AG04449 (cell line): ENCODE measurements at regions of chr15 and their contacts with region 1.

Region 1: GRCh38 chr15:64809649-64810496 is 15.6 kb downstream of the PIF1 start:
- DNase-seq: no peak
- H3K4me3 ChIP-seq: no peak overlapping the region
- CTCF ChIP-seq: peak; percentile 95

Region 2: DNA sequence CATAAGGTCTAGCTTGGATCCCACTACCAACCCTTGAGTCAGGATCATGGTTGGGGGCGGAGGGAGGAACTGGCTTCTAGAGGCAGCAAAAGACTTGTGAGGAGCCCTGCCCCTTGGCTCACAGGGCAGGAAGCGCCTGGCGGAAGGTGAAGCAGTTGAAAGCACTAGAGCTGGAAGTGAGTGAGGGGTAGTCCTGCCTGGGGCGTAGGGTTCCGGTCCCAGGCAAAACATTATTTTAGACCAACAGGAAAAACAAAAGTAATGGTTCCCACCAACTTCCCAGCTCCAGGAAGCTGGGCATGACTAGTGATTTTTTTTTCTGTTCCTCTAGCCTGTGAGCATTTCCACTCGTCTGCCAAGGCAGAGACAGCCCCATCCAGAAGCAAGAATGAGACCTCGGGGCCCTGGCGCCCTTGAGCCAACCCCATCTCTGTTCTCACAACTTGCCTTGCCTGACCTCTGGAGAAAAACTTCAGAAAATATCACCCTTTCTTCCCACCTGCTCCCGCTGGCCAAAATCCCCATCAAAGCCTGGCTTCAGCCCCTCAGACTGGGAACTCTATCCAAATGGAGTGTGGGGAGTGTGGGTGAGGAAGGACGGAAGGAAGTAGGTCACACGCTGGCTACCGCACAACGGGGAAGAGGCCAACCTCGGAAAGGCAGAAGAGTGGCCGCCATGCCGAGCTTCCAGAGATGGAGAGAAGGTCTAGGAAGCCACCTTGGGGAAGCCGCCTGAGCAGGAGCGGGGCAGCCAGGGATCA is 92.0 kb before region 1 on chr15:
- CTCF ChIA-PET with region 1: interaction called, 15 read pairs
- POLR2A ChIA-PET with region 1: no interaction called
- DNase-seq: no peak
- H3K4me3 ChIP-seq: no peak overlapping the region
- CTCF ChIP-seq: no peak

Region 3: DNA sequence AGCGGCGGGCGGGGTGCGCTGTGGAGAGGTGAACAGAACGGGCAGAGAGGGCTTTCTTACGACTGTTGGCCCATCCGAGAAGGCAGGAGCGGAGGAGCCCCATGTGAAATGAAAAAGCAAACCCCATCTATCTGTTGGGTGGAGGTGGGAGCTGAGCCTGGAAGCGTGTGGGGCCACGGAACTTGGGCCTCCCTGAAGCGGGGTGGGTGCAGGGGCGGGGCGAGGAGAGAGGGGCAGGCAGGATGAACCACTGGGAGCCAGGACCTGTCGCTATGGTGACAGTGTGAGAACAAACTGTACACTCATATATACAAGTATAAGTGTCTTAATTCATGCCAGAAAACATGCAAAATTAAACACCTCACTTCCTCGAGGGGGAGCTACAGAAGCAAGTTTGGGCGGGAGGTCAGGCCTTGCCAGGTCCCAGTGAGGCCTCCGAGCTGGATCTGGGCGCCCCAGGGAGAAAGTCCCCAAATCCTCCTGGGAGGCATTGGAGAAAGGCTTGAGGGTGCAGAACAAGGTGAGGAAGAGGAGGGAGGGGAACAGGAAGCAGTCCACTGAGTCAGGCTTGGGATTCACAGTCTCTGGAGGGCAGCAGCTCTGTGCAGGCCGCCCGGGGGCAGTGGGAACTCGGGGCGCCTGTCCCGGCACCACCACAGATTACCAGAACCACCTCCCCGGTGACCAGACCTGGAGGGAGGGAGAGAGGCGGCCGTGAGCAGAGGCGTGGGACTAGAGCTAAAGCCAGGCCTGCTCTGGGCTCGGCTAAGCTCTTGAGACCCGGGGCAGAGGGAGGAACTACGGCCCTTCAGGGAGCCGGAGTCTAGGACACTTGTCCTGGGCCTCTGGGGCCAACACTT is 69.3 kb before region 1 on chr15:
- CTCF ChIA-PET with region 1: interaction called, 14 read pairs
- POLR2A ChIA-PET with region 1: no interaction called
- DNase-seq: peak; percentile 5
- H3K4me3 ChIP-seq: no peak overlapping the region
- CTCF ChIP-seq: peak; percentile 11

Region 4: DNA sequence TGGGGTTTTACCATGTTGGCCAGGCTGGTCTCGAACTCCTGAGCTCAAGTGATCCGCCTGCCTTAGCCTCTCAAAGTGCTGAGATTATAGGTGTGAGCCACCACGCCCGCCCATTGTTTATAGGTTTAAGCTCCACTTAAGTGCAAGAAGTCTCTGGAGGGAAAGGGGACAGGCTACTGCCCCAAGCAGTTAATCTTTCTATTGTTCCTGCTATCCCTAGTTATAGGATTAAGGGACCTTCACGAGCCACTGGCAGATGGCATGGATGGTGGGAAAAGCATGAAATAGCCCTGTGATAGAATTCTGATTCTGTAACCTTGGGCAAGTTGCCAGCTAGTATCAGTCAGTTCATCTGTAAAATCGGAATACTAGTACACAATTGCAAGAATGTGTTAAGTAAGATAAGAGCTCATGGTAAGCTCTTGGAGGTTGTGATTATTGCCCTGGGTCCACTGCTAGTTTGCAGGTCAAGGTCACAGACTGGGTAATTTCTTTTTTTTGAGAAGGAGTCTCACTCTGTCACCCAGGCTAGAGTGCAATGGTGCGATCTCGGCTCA is 29.2 kb before region 1 on chr15:
- CTCF ChIA-PET with region 1: interaction called, 12 read pairs
- POLR2A ChIA-PET with region 1: no interaction called
- DNase-seq: no peak
- H3K4me3 ChIP-seq: no peak overlapping the region
- CTCF ChIP-seq: no peak

Region 5: GRCh38 chr15:64791401-64791800 is 18.5 kb before region 1 on chr15:
- CTCF ChIA-PET with region 1: interaction called, 31 read pairs
- POLR2A ChIA-PET with region 1: no interaction called
- DNase-seq: no peak
- H3K4me3 ChIP-seq: no peak overlapping the region
- CTCF ChIP-seq: no peak

Region 6: DNA sequence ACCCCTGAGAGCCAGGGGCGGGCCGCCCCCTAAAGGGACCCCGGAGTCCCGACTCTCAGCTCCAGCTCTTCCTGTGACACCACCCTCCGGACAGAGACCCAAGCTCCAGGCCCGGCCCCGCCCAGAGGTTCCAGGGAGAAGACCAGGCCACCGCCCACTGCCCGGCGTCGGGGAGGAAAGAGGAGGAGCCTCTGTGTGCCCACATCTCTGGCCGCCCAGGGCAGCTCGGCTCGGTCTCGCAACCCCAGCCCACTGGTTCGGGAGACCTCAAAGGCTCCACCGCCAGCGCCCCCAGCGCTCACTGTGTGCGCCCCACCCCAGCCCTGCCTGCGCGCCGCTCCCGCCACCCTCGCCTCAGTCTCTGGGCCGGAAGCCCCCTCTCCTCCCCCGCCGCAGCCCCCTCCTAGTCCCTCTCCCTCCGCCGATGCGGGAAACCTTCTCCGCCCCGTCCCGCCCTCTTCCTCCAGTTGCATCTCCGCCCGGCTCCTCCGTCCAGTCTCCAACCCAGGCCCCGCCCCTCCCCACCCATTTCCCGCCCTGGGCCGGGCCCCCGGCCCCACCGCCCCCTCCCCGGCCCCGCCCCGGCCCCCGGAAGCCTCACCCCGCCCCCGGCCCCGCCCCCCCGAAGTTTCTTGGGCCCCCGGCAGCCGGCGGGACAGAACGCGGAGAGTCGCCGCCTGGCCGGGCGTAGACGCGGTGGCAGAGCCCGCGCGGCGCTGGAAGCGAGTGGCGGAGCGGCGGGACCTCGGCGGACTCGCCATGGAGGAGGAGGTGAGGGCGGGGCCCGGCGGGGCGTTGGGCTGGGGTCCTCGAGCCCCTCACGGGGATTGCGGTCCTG is 31.6 kb after region 1 on chr15 and contains the start of gene PLEKHO2:
- CTCF ChIA-PET with region 1: interaction called, 11 read pairs
- POLR2A ChIA-PET with region 1: no interaction called
- DNase-seq: no peak
- H3K4me3 ChIP-seq: peak within 1 kb of the TSS; percentile 93
- CTCF ChIP-seq: peak; percentile 37

Region 7: DNA sequence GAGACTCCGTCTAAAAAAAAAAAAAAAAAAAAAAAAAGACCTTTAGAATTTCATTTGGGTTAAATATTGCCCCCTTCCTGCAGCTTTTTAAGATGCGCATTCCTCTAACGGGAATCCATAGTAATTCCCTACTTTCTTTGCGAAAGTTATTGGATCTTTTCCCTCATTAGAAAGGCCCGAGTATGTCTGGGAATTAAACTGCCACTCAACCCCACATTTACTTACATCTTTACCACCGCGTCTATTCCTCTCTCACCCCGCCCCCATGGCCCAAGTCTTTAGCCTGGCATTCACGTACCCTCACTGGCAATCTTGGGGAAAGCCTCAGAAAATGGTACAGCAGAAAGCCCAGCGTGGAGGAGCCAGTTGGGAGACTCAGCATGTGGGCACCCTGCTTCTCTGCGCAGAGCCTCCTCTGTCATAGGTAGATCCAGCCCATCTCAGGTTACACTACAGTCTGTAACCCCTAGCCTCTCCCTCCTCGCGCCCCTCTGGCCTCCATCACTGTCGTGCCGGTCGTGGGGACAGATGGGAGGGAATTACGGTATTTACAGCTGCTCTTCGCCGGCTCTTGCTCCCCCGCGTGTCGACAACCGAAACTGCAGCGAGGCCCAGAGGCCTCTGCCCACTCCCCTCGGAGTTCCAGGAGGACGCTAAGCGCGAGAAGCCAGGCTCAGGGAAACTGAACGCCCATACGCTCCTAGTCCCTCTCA is 95.4 kb after region 1 on chr15:
- CTCF ChIA-PET with region 1: interaction called, 33 read pairs
- POLR2A ChIA-PET with region 1: no interaction called
- DNase-seq: no peak
- H3K4me3 ChIP-seq: peak overlapping the region; percentile 43
- CTCF ChIP-seq: peak; percentile 90

Region 8: GRCh38 chr15:64975390-64975789 is 165.5 kb after region 1 on chr15:
- CTCF ChIA-PET with region 1: no interaction called
- POLR2A ChIA-PET with region 1: no interaction called
- DNase-seq: no peak
- H3K4me3 ChIP-seq: no peak overlapping the region
- CTCF ChIP-seq: no peak